ENCODE measurements at regions of chr6 and their contacts with region 1.

Region 1: DNA sequence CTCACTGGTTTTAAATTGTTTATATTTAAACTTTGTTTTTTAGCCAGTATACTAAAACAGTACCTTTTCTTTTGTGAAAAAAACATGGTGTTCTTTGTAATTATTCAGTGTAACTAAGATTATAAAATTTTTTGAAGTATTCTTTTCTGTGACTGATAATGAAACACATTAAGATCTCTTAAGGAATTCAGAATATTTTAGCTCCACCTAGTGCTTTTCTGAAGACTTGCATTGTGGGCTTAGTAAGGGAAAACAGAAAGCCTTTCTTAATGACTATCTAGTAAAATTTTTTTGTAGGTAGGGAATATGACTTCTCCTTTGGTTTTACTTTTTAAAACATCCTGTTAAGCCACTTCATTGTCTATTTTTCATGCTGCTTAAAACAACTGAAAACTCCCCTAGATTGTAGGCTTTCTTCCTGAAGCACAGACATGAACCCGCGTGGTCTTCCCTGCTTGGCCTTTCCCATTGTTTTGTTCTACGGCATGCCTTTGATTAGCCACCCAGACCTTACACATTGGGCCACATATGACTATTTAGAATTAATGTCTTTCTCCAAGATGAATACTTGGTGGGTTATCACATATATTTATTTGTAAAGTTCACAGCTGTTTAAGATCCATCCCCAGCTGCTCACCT is 72.1 kb downstream of the AFDN start:
- DNase-seq: peak; percentile 68
- ATAC-seq: peak; percentile 74
- H3K4me3 ChIP-seq: no peak overlapping the region
- H3K27ac ChIP-seq: no peak overlapping the region
- H3K4me1 ChIP-seq: no peaks in the 10 kb centered on the region
- H3K27me3 ChIP-seq: no peaks in the 10 kb centered on the region
- CTCF ChIP-seq: peak; percentile 76
- POLR2A ChIP-seq: no peak
- RAD21 ChIP-seq: peak; percentile 84

Region 2: DNA sequence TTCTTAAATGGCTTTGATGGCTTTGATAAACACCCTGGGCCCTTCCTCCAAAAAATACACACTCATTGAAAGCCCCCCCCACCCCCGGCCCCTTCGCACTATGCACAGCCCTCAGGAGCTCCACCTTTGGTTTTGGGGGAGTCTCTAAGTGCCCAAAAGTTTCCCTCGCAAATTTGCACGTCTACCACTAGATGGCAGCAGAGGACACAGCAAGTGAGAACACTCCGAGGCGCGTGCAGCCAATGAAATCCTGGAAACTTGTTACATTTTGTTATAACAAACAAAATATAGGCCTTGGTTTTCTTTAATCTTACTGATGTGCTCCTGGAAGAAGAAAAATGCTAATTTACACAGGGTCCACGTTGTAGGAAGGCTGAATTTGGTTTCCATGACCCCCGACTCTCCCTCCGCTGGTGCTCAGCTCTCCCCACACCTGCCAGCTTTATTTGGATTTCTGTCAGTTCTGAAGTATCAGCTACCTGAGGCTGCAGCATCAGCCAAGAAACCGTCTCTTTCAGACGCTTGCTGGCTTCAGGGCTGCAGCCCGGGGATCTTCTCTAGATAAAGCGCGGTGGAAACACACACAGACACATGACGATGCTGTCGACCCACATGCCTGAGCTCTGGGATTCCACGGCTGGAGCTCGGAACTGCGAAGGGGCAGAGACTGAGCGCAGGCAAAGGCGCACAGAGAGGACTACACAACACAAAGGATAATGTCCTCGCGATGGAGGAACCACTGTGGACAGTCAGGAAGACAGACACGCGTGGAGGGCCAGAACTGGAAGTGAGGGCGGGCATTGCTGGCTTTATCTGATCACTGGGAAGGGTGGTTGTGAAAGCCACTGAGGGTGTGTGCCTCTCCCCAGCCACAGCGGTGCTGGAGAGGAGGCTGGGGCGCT is 1123.4 kb before region 1 on chr6:
- CTCF ChIA-PET with region 1: no interaction called
- POLR2A ChIA-PET with region 1: no interaction called
- dilution Hi-C with region 1: no loop called
- in situ Hi-C with region 1: no loop called
- intact Hi-C with region 1: loop called (anchors 10 kb)
- DNase-seq: peak; percentile 75
- ATAC-seq: peak; percentile 93
- H3K4me3 ChIP-seq: no peak overlapping the region
- H3K27ac ChIP-seq: no peak overlapping the region
- H3K4me1 ChIP-seq: no peaks in the 10 kb centered on the region
- H3K27me3 ChIP-seq: peaks cover 21% of the 10 kb centered on the region; the same call in 1 of the 2 replicates
- CTCF ChIP-seq: peak; percentile 84
- POLR2A ChIP-seq: no peak
- RAD21 ChIP-seq: peak; percentile 83

Region 3: DNA sequence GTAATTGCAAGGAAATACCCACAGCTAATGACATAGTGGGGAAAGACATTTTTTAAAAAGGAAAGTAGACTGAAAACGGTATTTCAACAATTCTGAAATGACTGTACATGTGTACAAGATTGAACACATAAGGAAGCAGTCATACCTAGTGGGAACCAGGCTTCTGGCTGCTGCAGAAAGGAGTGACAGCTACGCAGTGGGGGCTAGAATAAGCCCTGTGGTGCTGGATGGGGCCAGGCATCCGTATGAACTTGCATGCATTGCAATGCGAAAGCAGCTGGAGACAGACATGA is 686.1 kb before region 1 on chr6:
- CTCF ChIA-PET with region 1: no interaction called
- POLR2A ChIA-PET with region 1: no interaction called
- dilution Hi-C with region 1: no loop called
- in situ Hi-C with region 1: loop called (anchors 25 kb)
- intact Hi-C with region 1: no loop called
- DNase-seq: no peak
- ATAC-seq: no peak
- H3K4me3 ChIP-seq: no peak overlapping the region
- H3K27ac ChIP-seq: no peak overlapping the region
- H3K4me1 ChIP-seq: no peaks in the 10 kb centered on the region
- H3K27me3 ChIP-seq: no peaks in the 10 kb centered on the region
- CTCF ChIP-seq: no peak
- POLR2A ChIP-seq: no peak
- RAD21 ChIP-seq: no peak

Region 4: GRCh38 chr6:167287513-167288048 is 611.2 kb before region 1 on chr6:
- CTCF ChIA-PET with region 1: no interaction called
- POLR2A ChIA-PET with region 1: no interaction called
- dilution Hi-C with region 1: no loop called
- in situ Hi-C with region 1: no loop called
- intact Hi-C with region 1: loop called (anchors 2 kb)
- DNase-seq: no peak
- ATAC-seq: no peak
- H3K4me3 ChIP-seq: no peak overlapping the region
- H3K27ac ChIP-seq: no peak overlapping the region
- H3K4me1 ChIP-seq: no peaks in the 10 kb centered on the region
- H3K27me3 ChIP-seq: no peaks in the 10 kb centered on the region
- CTCF ChIP-seq: no peak
- POLR2A ChIP-seq: no peak
- RAD21 ChIP-seq: no peak

Region 5: GRCh38 chr6:167826230-167826895 is 72.4 kb before region 1 on chr6:
- CTCF ChIA-PET with region 1: no interaction called
- POLR2A ChIA-PET with region 1: no interaction called
- dilution Hi-C with region 1: no loop called
- in situ Hi-C with region 1: no loop called
- intact Hi-C with region 1: loop called (anchors 1 kb)
- DNase-seq: peak; percentile 21
- ATAC-seq: peak; percentile 87
- H3K4me3 ChIP-seq: peak overlapping the region; percentile 100
- H3K27ac ChIP-seq: no peak overlapping the region; the same call in 1 of the 2 replicates
- H3K4me1 ChIP-seq: peaks cover 2% of the 10 kb centered on the region; the same call in 1 of the 2 replicates
- H3K27me3 ChIP-seq: no peaks in the 10 kb centered on the region; the same call in 1 of the 2 replicates
- CTCF ChIP-seq: peak; percentile 40
- POLR2A ChIP-seq: no peak
- RAD21 ChIP-seq: no peak; the same call in 1 of the 2 replicates

Measured in IMR-90 (cell line).